B cell (primary cell): ENCODE measurements at regions of chr7 and their contacts with region 1.

Region 1: GRCh38 chr7:95476904-95477594 is 8.7 kb upstream of the ASB4 start:
- DNase-seq: peak; percentile 70
- ATAC-seq: peak; percentile 64
- H3K4me3 ChIP-seq: no peak overlapping the region
- H3K4me3 Mint-ChIP-seq: no peak overlapping the region
- H3K27ac ChIP-seq: no peak overlapping the region
- H3K27ac Mint-ChIP-seq: no peak overlapping the region
- H3K4me1 ChIP-seq: no peaks in the 10 kb centered on the region
- H3K4me1 Mint-ChIP-seq: peaks cover 3% of the 10 kb centered on the region
- H3K27me3 ChIP-seq: no peaks in the 10 kb centered on the region
- H3K27me3 Mint-ChIP-seq: peaks cover 8% of the 10 kb centered on the region
- CTCF ChIP-seq: peak; percentile 91

Region 2: GRCh38 chr7:94442639-94443038 is 1034.4 kb before region 1 on chr7:
- CTCF ChIA-PET with region 1: interaction called, 246 read pairs
- POLR2A ChIA-PET with region 1: no interaction called
- intact Hi-C with region 1: no loop called
- DNase-seq: no peak
- ATAC-seq: no peak
- H3K4me3 ChIP-seq: no peak overlapping the region
- H3K4me3 Mint-ChIP-seq: no peak overlapping the region
- H3K27ac ChIP-seq: no peak overlapping the region
- H3K27ac Mint-ChIP-seq: no peak overlapping the region
- H3K4me1 ChIP-seq: no peaks in the 10 kb centered on the region
- H3K4me1 Mint-ChIP-seq: no peaks in the 10 kb centered on the region
- H3K27me3 ChIP-seq: peaks cover 0 to 9% (median 0%) of the 10 kb centered on the region in 4 experiments
- H3K27me3 Mint-ChIP-seq: peaks cover 23% of the 10 kb centered on the region
- CTCF ChIP-seq: no peak

Region 3: DNA sequence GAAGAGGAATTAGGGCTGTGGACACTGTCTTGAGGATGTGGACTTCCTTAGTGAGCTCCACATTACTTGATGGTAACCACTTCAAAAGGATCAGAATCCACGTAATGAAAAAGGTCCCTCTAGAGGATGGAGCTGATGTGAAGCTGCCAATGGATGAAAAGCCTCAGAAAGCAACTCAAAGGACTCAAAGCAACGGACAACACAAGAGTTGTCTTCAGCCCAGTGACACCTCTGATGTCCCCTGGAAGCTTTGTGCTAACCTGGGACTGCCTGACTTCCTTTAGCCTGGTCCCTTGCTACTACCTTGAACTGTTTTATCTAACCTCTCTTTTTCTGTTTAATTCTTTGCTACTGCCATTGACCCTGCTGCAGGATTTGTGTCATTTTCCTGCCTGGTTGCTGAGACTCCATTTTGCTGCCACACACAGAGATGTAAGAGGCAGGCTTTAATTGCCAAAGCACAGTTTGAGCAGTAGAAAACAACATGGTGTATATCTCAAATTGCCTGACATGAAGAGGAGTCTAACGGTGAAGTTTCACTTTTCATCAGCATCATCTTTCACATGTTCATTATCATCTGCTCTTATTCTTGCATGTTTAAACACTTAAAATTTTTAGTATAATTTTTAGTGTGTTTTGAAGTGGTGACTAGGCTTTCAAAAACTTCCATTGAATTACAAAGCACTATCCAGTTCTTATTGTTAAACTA is 810.0 kb before region 1 on chr7:
- CTCF ChIA-PET with region 1: no interaction called
- POLR2A ChIA-PET with region 1: no interaction called
- intact Hi-C with region 1: loop called (anchors 5 kb)
- DNase-seq: no peak
- ATAC-seq: no peak
- H3K4me3 ChIP-seq: no peak overlapping the region
- H3K4me3 Mint-ChIP-seq: no peak overlapping the region
- H3K27ac ChIP-seq: no peak overlapping the region
- H3K27ac Mint-ChIP-seq: no peak overlapping the region
- H3K4me1 ChIP-seq: no peaks in the 10 kb centered on the region
- H3K4me1 Mint-ChIP-seq: no peaks in the 10 kb centered on the region
- H3K27me3 ChIP-seq: no peaks in the 10 kb centered on the region
- H3K27me3 Mint-ChIP-seq: peaks cover 2% of the 10 kb centered on the region
- CTCF ChIP-seq: no peak

Region 4: GRCh38 chr7:95342642-95343307 is 134.3 kb before region 1 on chr7:
- CTCF ChIA-PET with region 1: interaction called, 3 read pairs
- POLR2A ChIA-PET with region 1: no interaction called
- intact Hi-C with region 1: loop called (anchors 10 kb)
- DNase-seq: no peak
- ATAC-seq: no peak
- H3K4me3 ChIP-seq: no peak overlapping the region
- H3K4me3 Mint-ChIP-seq: no peak overlapping the region
- H3K27ac ChIP-seq: no peak overlapping the region
- H3K27ac Mint-ChIP-seq: no peak overlapping the region
- H3K4me1 ChIP-seq: no peaks in the 10 kb centered on the region
- H3K4me1 Mint-ChIP-seq: no peaks in the 10 kb centered on the region
- H3K27me3 ChIP-seq: peaks cover 0 to 2% (median 0%) of the 10 kb centered on the region in 4 experiments
- H3K27me3 Mint-ChIP-seq: peaks cover 2% of the 10 kb centered on the region
- CTCF ChIP-seq: no peak

Region 5: GRCh38 chr7:95491634-95492320 is 14.7 kb after region 1 on chr7:
- CTCF ChIA-PET with region 1: interaction called, 14 read pairs
- POLR2A ChIA-PET with region 1: no interaction called
- intact Hi-C with region 1: no loop called
- DNase-seq: no peak
- ATAC-seq: no peak
- H3K4me3 ChIP-seq: no peak overlapping the region
- H3K4me3 Mint-ChIP-seq: no peak overlapping the region
- H3K27ac ChIP-seq: no peak overlapping the region
- H3K27ac Mint-ChIP-seq: no peak overlapping the region
- H3K4me1 ChIP-seq: no peaks in the 10 kb centered on the region
- H3K4me1 Mint-ChIP-seq: no peaks in the 10 kb centered on the region
- H3K27me3 ChIP-seq: peaks cover 0 to 3% (median 0%) of the 10 kb centered on the region in 4 experiments
- H3K27me3 Mint-ChIP-seq: peaks cover 10% of the 10 kb centered on the region
- CTCF ChIP-seq: no peak

Region 6: GRCh38 chr7:95690367-95690947 is 213.4 kb after region 1 on chr7:
- CTCF ChIA-PET with region 1: interaction called, 31 read pairs
- POLR2A ChIA-PET with region 1: no interaction called
- intact Hi-C with region 1: no loop called
- DNase-seq: peak; percentile 68
- ATAC-seq: peak; percentile 59
- H3K4me3 ChIP-seq: no peak overlapping the region
- H3K4me3 Mint-ChIP-seq: peak overlapping the region; percentile 25
- H3K27ac ChIP-seq: no peak overlapping the region
- H3K27ac Mint-ChIP-seq: no peak overlapping the region
- H3K4me1 ChIP-seq: peaks cover 0 to 4% of the 10 kb centered on the region in 2 donors
- H3K4me1 Mint-ChIP-seq: peaks cover 5% of the 10 kb centered on the region
- H3K27me3 ChIP-seq: no peaks in the 10 kb centered on the region
- H3K27me3 Mint-ChIP-seq: peaks cover 9% of the 10 kb centered on the region
- CTCF ChIP-seq: peak; percentile 83